ENCODE measurements at regions of chr2 and their contacts with region 1.

Region 1: DNA sequence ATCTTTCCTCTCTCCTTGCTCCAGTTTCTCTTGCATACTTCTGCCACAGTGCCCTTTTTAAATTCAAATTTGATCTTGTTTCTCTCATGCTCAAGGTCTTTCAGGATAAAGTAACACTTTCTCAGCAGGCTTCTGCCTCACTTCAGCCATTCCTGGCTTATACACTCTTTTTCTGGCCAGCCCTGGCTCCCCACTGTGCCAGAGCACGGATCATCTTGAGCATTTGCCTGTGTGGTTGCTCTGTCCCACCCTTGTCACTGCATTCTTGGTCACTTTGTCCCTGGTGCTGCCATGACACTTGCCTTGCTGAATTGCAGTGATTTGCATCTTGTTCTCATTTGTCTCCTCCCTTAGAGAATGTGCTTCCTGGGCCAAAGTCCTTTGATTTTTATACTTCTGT is 634.3 kb downstream of the TMEM182 start:
- DNase-seq: no peak
- H3K4me3 Mint-ChIP-seq: no peak overlapping the region
- H3K27ac Mint-ChIP-seq: no peak overlapping the region
- H3K4me1 Mint-ChIP-seq: no peaks in the 10 kb centered on the region
- H3K27me3 Mint-ChIP-seq: no peaks in the 10 kb centered on the region

Region 2: DNA sequence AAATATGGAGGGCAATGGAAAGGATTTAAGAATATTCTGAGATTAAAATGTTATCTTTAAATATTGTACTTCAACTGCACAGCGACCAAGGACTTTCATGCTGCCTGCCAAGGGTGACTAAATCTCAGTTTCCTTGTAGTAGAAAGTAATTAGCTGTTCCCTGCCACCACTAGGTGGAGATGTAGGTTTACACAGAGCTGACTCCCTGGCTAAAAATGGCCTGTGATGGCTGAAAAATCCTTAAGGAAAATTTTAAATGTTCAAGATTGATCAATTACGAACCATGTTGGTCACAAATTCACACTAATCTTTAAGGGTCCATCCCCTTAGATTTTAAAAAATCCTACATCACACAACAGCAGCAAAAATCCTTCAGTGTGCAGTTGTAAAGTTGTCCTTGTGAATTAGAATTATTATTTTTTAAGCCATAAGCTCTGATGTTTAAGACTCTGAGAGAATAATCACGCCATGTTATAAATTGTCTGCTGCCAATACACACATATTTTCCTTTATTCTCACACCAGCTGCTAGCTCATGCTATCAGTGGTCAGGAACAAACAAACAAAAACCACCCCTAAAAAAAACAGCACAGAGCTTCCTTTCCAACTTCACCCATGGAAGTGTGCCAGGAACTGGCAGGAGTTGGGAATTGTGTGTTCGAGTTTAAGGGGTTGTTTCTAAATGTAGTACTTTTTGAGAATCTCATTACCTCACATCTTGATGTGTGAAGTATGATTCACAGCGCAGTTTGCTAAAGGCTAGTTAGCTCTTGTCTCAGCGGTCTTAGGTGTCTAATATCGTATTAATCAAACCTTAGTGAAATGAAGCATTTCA is 234.5 kb before region 1 on chr2:
- intact Hi-C with region 1: no loop called
- DNase-seq: peak; percentile 59
- H3K4me3 Mint-ChIP-seq: no peak overlapping the region
- H3K27ac Mint-ChIP-seq: no peak overlapping the region
- H3K4me1 Mint-ChIP-seq: no peaks in the 10 kb centered on the region
- H3K27me3 Mint-ChIP-seq: peaks cover 2% of the 10 kb centered on the region

Region 3: DNA sequence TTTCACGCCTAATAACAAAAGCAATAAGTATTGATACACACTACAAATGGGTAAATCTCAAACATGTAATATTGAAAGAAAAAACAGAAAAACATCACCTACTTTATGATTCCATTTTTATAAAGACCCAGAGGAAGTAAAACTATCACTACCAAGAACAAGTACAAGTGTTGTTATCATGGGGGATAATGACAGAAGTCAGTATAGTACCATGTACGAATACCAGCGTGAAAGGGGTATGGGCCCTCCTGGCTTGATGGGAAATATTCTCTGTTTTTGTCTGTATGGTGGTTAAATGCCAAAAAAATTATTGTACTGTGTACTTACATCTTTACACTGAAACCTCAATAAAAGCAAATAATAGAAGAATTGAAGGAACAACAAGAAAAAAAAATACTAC is 31.4 kb after region 1 on chr2:
- intact Hi-C with region 1: loop called (anchors 5 kb)
- DNase-seq: no peak
- H3K4me3 Mint-ChIP-seq: no peak overlapping the region
- H3K27ac Mint-ChIP-seq: no peak overlapping the region
- H3K4me1 Mint-ChIP-seq: no peaks in the 10 kb centered on the region
- H3K27me3 Mint-ChIP-seq: no peaks in the 10 kb centered on the region

Region 4: GRCh38 chr2:103484906-103485305 is 88.8 kb after region 1 on chr2:
- intact Hi-C with region 1: no loop called
- DNase-seq: no peak
- H3K4me3 Mint-ChIP-seq: no peak overlapping the region
- H3K27ac Mint-ChIP-seq: no peak overlapping the region
- H3K4me1 Mint-ChIP-seq: no peaks in the 10 kb centered on the region
- H3K27me3 Mint-ChIP-seq: no peaks in the 10 kb centered on the region

Measured in activated CD4-positive, alpha-beta T cell treated with anti-CD3 and anti-CD28 coated beads, Interleukin-2, amount 10 ng/mL, durations not matched to agents 24 days and 14 days (primary cell).